ENCODE measurements at regions of chr14 and their contacts with region 1.

Region 1: DNA sequence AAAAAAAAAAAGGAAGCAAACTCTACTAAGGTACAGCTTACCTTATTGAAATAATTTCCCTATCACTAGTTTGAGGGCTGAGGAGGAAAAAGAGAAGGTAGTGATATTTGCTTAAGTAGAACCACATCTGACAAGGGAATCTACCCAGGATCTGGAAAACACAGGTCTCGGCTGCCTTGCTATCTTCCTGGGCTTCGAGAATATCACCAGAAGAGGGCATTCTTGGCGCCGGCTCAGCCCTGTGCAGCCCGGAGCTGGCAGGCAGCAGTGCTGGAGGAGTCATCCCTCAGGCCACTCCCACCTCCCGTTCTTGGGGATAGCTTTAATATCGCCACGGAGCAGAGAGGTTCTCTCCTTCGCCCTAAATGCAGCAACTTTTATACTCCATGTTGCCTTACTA is 1181.2 kb downstream of the VRK1 start:
- DNase-seq: peak; percentile 46 to 88 (median 80)
- ATAC-seq: peak; percentile 76
- H3K4me3 ChIP-seq: peak overlapping the region; percentile 66 to 75
- H3K4me3 Mint-ChIP-seq: peak overlapping the region; percentile 82
- H3K27ac ChIP-seq: peak overlapping the region; percentile 73 to 77
- H3K27ac Mint-ChIP-seq: peak overlapping the region; percentile 88
- H3K4me1 ChIP-seq: peaks cover 37% of the 10 kb centered on the region
- H3K4me1 Mint-ChIP-seq: peaks cover 62% of the 10 kb centered on the region
- H3K27me3 ChIP-seq: no peaks in the 10 kb centered on the region
- H3K27me3 Mint-ChIP-seq: no peaks in the 10 kb centered on the region
- CTCF ChIP-seq: peak; percentile 53

Region 2: DNA sequence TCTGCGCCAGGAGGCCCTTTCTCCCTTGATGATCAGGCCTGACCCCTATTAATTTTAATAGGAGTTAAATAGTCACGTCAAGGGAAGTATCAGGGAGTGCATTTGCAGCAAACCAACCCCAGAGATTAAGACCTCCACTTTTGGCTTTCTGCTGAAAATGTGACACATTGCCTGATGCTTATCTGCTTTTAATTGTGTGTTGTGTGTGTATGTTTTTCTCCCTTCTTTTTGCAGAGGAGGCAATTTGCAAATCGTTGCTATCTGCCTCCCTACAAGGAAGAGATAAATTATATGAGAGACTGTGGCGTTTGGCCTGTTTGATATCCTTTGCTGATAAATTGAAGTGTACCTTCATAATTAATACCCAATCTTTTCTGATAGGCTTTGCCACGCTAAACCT is 358.3 kb before region 1 on chr14:
- CTCF ChIA-PET with region 1: interaction called, 3 read pairs
- POLR2A ChIA-PET with region 1: no interaction called
- intact Hi-C with region 1: loop called (anchors 1 to 5 kb)
- DNase-seq: peak in 1 of 9 experiments; percentile 42
- ATAC-seq: peak; percentile 15
- H3K4me3 ChIP-seq: peak overlapping the region in 1 of 2 experiments; percentile 12
- H3K4me3 Mint-ChIP-seq: peak overlapping the region; percentile 83
- H3K27ac ChIP-seq: peak overlapping the region; percentile 36 to 84
- H3K27ac Mint-ChIP-seq: peak overlapping the region; percentile 98
- H3K4me1 ChIP-seq: peaks cover 43% of the 10 kb centered on the region
- H3K4me1 Mint-ChIP-seq: peaks cover 53% of the 10 kb centered on the region
- H3K27me3 ChIP-seq: no peaks in the 10 kb centered on the region
- H3K27me3 Mint-ChIP-seq: no peaks in the 10 kb centered on the region
- CTCF ChIP-seq: no peak

Region 3: GRCh38 chr14:98008381-98009113 is 30.2 kb after region 1 on chr14:
- CTCF ChIA-PET with region 1: interaction called, 4 read pairs
- POLR2A ChIA-PET with region 1: interaction called, 6 read pairs
- intact Hi-C with region 1: loop called in 1 of 2 experiments (anchors 2 kb)
- DNase-seq: peak in 1 of 9 experiments; percentile 26
- ATAC-seq: peak; percentile 68
- H3K4me3 ChIP-seq: no peak overlapping the region
- H3K4me3 Mint-ChIP-seq: no peak overlapping the region
- H3K27ac ChIP-seq: no peak overlapping the region
- H3K27ac Mint-ChIP-seq: no peak overlapping the region
- H3K4me1 ChIP-seq: peaks cover 31% of the 10 kb centered on the region
- H3K4me1 Mint-ChIP-seq: peaks cover 27% of the 10 kb centered on the region
- H3K27me3 ChIP-seq: no peaks in the 10 kb centered on the region
- H3K27me3 Mint-ChIP-seq: no peaks in the 10 kb centered on the region
- CTCF ChIP-seq: no peak

Region 4: GRCh38 chr14:98219638-98220037 is 241.3 kb after region 1 on chr14:
- CTCF ChIA-PET with region 1: no interaction called
- POLR2A ChIA-PET with region 1: no interaction called
- intact Hi-C with region 1: loop called in 1 of 2 experiments (anchors 5 kb)
- DNase-seq: no peak
- ATAC-seq: no peak
- H3K4me3 ChIP-seq: no peak overlapping the region
- H3K4me3 Mint-ChIP-seq: no peak overlapping the region
- H3K27ac ChIP-seq: no peak overlapping the region
- H3K27ac Mint-ChIP-seq: peak overlapping the region; percentile 28
- H3K4me1 ChIP-seq: peaks cover 73% of the 10 kb centered on the region
- H3K4me1 Mint-ChIP-seq: peaks cover 39% of the 10 kb centered on the region
- H3K27me3 ChIP-seq: no peaks in the 10 kb centered on the region
- H3K27me3 Mint-ChIP-seq: no peaks in the 10 kb centered on the region
- CTCF ChIP-seq: no peak

Region 5: DNA sequence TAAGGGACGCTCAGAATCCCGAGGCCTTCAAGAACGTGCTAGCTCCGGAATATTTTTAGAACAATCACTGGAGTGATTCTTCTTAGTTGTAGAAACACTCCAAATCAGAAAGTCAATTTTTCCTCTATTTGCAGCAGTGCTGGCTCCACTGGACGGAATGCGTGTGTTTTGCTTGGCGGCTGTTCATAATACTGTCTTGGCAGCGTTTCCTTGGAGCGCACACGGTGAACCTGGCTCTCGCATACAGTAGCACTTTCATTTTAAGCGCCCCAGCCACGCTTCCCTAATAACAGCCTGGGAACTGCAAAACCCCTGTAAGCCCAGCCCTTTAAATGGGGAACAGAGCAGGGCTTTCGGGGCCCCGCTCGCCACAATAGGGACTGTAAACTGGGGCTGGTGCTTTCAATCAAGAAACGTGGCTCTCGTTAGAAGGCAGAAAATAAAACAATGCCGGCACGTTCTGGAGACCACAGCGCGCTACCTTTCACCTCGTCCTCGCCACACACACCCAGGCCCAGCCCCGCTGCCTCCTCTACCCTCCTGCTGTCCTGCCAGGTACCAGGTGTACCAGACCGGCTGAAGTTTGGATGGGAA is 1213.8 kb after region 1 on chr14:
- CTCF ChIA-PET with region 1: no interaction called
- POLR2A ChIA-PET with region 1: interaction called, 7 read pairs
- intact Hi-C with region 1: loop called in 1 of 2 experiments (anchors 10 kb)
- DNase-seq: peak in 3 of 9 experiments; percentile 55 to 75 (median 64)
- ATAC-seq: peak; percentile 38
- H3K4me3 ChIP-seq: peak overlapping the region; percentile 36 to 44
- H3K4me3 Mint-ChIP-seq: peak overlapping the region; percentile 87
- H3K27ac ChIP-seq: peak overlapping the region; percentile 71 to 76
- H3K27ac Mint-ChIP-seq: peak overlapping the region; percentile 99
- H3K4me1 ChIP-seq: peaks cover 97% of the 10 kb centered on the region
- H3K4me1 Mint-ChIP-seq: peaks cover 96% of the 10 kb centered on the region
- H3K27me3 ChIP-seq: no peaks in the 10 kb centered on the region
- H3K27me3 Mint-ChIP-seq: no peaks in the 10 kb centered on the region
- CTCF ChIP-seq: no peak